PC-9 (cell line): ENCODE measurements at regions of chr10 and their contacts with region 1.

Region 1: GRCh38 chr10:72875250-72876055 is 18.1 kb upstream of the OIT3 start:
- DNase-seq: peak; percentile 18 to 53
- H3K4me3 ChIP-seq: no peak overlapping the region
- H3K27ac ChIP-seq: no peak overlapping the region
- H3K4me1 ChIP-seq: no peaks in the 10 kb centered on the region
- H3K27me3 ChIP-seq: no peaks in the 10 kb centered on the region
- CTCF ChIP-seq: peak; percentile 79

Region 2: DNA sequence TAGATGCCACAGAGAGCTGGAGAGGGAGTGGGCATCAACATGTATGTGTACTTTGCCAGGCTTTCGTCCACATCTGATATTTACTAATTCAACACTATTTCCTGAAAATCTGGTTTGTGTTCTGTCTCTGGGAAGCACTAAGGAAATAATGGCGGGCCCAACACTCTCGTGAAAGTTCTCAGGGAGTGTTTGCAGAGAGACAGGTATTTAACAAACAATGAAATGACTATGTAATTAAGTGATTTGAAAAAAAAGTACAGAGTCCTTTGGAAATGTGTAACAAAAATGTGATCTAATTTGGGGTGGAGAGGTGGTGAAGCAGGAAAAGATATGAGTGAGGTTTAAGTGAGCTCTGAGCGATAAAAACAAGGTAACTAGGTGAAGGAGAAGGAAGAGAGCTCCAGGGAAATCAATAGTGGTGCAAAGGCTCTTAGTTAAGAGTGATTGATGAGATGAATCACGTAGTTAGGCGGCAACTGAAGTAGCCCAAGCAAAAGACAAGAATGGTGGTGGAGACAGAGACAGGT is 425.5 kb before region 1 on chr10:
- CTCF ChIA-PET with region 1: no interaction called
- POLR2A ChIA-PET with region 1: interaction called, 19 read pairs
- intact Hi-C with region 1: no loop called
- DNase-seq: peak in 1 of 2 experiments; percentile 46
- H3K4me3 ChIP-seq: no peak overlapping the region
- H3K27ac ChIP-seq: no peak overlapping the region
- H3K4me1 ChIP-seq: no peaks in the 10 kb centered on the region
- H3K27me3 ChIP-seq: no peaks in the 10 kb centered on the region
- CTCF ChIP-seq: no peak

Region 3: GRCh38 chr10:73060738-73061635 is 185.5 kb after region 1 on chr10:
- CTCF ChIA-PET with region 1: no interaction called
- POLR2A ChIA-PET with region 1: no interaction called
- intact Hi-C with region 1: loop called (anchors 5 kb)
- DNase-seq: no peak
- H3K4me3 ChIP-seq: no peak overlapping the region
- H3K27ac ChIP-seq: no peak overlapping the region
- H3K4me1 ChIP-seq: no peaks in the 10 kb centered on the region
- H3K27me3 ChIP-seq: no peaks in the 10 kb centered on the region
- CTCF ChIP-seq: peak; percentile 80

Region 4: GRCh38 chr10:73159038-73159648 is 283.7 kb after region 1 on chr10:
- CTCF ChIA-PET with region 1: no interaction called
- POLR2A ChIA-PET with region 1: no interaction called
- intact Hi-C with region 1: loop called (anchors 10 kb)
- DNase-seq: peak; percentile 38 to 39
- H3K4me3 ChIP-seq: no peak overlapping the region
- H3K27ac ChIP-seq: 0 out of 2 replicates have a peak overlapping the region, but pooled peaks have one; percentile 19
- H3K4me1 ChIP-seq: no peaks in the 10 kb centered on the region
- H3K27me3 ChIP-seq: no peaks in the 10 kb centered on the region
- CTCF ChIP-seq: peak; percentile 92